ENCODE measurements at regions of chr3 and their contacts with region 1.

Region 1: GRCh38 chr3:71578054-71578755 is 5.3 kb downstream of the FOXP1 start:
- DNase-seq: no peak
- H3K4me3 ChIP-seq: peak overlapping the region; percentile 90
- H3K27ac ChIP-seq: peak overlapping the region; percentile 88
- H3K4me1 ChIP-seq: peaks cover 43% of the 10 kb centered on the region
- CTCF ChIP-seq: no peak

Region 2: DNA sequence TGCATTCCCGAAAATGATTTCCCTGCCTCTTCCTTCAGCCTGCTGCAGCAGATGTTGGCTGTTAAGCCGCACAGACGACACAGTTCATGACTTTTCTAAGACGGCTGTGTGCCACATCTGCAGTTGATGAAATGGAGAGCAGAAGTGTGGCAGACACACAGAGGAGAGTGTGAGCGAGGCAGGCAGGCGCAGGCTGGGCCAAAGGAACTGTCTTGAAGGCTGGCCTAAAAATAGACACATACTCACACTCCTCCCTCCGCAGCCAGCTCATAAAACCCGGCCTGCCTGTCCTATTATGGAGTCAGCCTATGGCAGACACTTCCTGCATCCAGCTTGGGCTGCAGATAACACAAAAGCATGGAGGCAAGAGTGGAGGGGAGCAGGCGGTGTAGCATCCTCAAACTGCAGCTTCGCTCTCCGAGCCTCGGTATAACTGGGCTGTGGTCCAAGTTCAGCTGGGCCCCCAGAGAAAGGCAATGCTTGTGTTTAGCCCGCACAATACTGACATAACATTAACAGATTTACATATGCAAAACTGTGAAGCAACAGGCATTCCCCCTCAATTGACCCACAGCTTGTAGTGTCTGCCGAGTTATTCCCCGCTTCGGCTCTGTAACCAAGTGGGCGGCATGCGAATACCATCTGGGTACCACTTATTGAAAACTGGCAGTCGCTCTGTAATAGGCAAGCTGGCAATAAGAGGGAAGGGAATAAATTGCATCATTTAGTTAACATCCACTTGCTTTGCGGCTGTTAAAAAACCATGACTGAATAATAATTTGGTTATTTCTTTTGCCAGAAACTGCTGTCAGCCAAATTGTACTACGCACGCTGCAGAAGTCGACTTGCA is 35.5 kb before region 1 on chr3:
- CTCF ChIA-PET with region 1: interaction called, 3 read pairs
- POLR2A ChIA-PET with region 1: interaction called, 10 read pairs
- intact Hi-C with region 1: loop called (anchors 1 kb)
- DNase-seq: peak; percentile 90
- H3K4me3 ChIP-seq: peak overlapping the region; percentile 56
- H3K27ac ChIP-seq: peak overlapping the region; percentile 85
- H3K4me1 ChIP-seq: peaks cover 80% of the 10 kb centered on the region
- CTCF ChIP-seq: no peak

Measured in OCI-LY7 (cell line).